ENCODE measurements at regions of chr1 and their contacts with region 1.

Region 1: DNA sequence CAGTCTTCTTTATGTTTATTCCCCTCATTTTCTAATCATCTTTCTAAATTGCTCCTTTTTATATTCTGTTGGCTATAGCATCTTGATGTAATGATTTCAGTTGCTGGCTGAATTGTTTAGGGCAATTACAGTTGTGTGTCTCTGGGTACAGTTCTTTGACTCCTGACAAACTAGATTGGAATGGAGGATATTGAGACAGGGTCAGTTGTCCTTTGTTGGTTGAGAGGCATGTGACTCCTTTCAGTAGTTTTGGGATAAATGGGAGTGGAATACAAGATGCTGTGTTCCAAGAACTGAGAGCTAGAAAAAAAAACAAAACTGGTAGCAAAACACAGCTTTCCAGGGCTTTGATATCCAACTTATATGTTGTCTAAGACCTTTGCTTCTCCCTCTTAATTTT is 1.5 kb downstream of the CENPF start:
- DNase-seq: no peak
- ATAC-seq: no peak
- H3K4me3 ChIP-seq: peak overlapping the region; percentile 79 to 88
- H3K27ac ChIP-seq: peak overlapping the region; percentile 97
- H3K4me1 ChIP-seq: peaks cover 27% of the 10 kb centered on the region
- H3K27me3 ChIP-seq: no peaks in the 10 kb centered on the region
- CTCF ChIP-seq: no peak

Region 2: DNA sequence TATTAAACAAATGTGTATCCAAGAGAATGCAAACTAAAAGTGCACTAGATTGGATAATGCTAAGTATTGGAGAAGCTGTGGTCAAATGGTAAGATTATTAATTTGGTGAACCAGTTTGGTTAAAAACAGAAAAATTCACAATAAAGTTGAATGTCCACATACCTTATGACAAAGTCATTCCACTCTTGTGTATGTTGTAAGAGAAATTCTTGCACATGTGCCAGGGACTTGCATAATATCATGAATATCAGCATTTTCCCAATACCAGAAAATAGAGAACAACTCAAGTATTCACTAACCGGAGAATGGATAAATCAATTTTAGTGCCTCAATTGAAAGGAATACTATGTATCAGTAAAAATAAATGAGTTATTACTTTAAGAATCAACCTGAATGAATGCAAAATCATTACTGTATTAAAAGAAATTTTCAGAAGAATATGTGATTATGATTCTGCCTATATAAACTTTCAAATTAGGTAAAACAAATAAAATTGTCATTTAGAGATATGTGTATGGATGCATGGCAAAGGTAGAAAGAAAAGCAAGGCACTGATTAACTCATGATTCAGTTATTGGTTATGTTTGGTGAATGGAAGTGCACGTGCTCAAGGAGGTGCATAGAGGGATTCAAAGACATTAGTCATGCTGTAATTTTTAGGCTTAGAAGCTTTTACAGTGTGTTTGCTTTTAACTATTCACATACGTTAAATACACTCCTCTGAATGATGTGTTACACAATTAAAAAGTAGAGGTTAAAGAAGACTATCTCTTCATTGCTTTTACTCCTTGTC is 260.5 kb after region 1 on chr1:
- CTCF ChIA-PET with region 1: no interaction called
- POLR2A ChIA-PET with region 1: interaction called, 13 read pairs
- in situ Hi-C with region 1: no loop called
- intact Hi-C with region 1: no loop called
- DNase-seq: no peak
- ATAC-seq: no peak
- H3K4me3 ChIP-seq: no peak overlapping the region
- H3K27ac ChIP-seq: no peak overlapping the region
- H3K4me1 ChIP-seq: no peaks in the 10 kb centered on the region
- H3K27me3 ChIP-seq: no peaks in the 10 kb centered on the region
- CTCF ChIP-seq: no peak

Measured in Panc1 (cell line).